AG04449 (cell line): ENCODE measurements at regions of chr1 and their contacts with region 1.

Region 1: GRCh38 chr1:44594871-44595746 is 79.2 kb downstream of the TMEM53 start:
- DNase-seq: no peak
- H3K4me3 ChIP-seq: no peak overlapping the region
- CTCF ChIP-seq: peak; percentile 99

Region 2: DNA sequence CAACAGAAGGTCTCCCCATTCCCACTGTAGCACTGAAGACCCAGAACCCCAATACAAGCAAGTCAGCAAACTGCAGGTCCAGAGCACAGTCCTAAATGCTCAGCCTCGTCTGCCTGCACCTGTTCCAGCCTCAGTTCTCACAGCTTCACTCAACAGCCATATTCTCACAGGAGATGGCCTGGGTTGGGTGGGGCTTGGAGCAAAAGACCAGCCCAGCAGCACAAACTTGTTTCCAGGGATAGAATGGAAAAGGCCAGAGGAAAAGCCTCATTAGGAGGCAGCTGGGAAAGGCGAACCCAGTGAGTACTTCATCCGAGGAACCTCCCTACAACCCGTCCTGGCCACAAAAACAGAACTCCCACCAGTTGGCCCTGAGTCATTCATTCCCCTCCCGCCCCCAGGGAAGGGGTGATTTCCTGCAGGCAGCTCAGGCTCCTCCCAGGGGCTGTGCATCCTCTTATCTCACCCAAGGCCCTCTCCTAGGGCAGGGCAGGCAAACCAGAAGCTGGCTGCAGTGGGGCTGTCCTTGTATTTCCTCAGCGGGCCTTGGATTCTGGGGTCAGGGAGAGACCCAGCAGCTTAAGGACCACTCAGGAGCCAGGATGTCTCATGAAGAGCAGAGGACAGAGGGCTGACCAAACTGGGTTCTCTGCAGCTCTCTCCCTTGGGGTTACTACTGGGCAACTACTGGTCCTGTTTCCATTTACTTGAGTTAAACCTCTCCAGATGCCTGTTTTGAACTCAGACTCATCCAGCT is 1264.9 kb before region 1 on chr1:
- CTCF ChIA-PET with region 1: no interaction called
- POLR2A ChIA-PET with region 1: no interaction called
- DNase-seq: no peak
- H3K4me3 ChIP-seq: no peak overlapping the region
- CTCF ChIP-seq: no peak

Region 3: DNA sequence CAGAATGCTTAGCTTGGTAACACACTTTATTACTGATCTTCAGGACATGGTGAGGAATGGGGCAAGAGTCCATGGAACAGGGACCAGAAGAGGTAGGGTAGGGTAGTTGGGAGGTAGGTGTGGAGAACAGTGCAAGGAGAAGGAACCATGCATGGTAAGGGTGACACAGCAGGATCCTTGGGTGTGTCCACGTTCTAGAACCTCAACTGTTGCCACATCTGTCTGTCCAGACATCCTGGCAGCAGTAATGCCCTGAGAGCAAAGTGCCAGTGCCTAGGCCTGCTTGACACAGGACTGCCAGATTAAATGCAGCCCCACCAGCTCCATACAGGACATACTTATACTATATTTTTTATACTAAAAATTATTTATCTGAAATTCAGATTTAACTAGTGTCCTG is 367.9 kb before region 1 on chr1:
- CTCF ChIA-PET with region 1: interaction called, 12 read pairs
- POLR2A ChIA-PET with region 1: no interaction called
- DNase-seq: no peak
- H3K4me3 ChIP-seq: no peak overlapping the region
- CTCF ChIP-seq: no peak

Region 4: DNA sequence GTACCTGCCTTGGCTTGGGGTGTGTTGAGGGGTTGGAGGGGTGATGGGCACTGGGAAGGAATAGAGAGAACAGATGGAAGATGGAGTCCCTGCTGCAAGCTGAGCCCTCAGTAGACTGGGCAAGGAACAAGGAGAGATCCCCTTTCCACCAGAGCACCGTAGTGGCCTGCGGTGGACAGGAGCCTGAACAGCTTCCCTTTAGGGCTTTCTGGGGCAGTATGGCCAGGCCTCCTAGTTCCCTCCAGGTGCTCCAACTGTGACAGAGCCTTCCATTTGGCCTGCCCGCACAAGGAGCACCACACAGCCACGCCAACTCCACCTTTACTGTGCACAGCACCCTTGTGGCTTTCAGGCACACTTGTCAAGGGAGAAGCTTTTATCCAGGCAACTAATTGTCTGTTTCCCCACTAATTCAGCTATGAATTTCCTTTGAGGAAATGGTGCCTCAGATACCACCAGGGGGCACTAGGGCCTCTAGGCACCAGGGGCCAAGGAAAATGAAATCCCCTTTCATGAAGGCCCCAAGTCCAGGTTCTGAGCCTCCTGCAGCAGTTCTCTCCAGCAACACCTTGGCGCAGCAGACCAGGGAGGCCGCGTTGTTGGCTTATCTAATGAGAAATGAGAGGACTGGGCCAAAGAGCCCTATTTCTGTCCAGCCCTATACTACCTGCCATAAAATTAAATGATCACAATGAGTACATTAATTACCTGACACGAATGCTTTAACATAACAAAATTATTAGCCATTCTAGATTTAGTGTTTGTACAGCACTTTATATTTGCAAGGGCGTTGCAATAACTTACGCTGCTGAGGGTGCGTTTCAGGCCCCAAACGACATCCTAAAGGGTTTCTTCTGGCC is 217.0 kb before region 1 on chr1:
- CTCF ChIA-PET with region 1: interaction called, 138 read pairs
- POLR2A ChIA-PET with region 1: no interaction called
- DNase-seq: no peak
- H3K4me3 ChIP-seq: no peak overlapping the region
- CTCF ChIP-seq: peak; percentile 72

Region 5: DNA sequence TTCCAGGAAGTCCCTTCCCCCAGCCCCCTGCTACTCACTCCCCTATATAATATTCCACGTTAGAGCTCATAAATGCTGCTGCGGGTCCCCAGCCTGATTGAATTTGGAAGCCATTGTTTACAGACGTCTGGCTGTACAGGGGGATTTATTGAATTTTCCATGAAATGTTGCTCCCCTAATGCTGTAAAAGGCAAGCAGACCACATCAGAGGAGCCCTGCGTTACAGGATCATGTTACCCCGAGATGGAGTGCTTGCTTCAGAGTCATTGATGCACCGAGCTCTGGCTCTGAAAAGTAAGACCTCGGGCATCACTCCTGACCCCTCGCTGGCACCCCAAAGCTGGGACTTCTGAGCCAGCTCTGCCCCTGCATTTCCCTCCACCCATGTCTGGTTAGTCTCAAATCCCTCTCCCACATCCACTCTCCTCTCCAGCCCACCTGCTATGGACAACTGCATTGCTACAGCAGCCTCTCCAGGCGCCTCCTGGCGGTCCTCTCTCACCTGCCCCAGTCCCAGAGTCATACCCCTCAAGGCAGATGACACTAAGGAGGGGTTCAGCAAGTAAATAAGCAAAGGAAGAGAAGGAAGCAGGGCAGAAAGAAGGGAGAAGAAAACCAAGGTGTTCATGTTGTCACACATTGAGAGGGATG is 48.6 kb before region 1 on chr1:
- CTCF ChIA-PET with region 1: no interaction called
- POLR2A ChIA-PET with region 1: no interaction called
- DNase-seq: no peak
- H3K4me3 ChIP-seq: no peak overlapping the region
- CTCF ChIP-seq: no peak

Region 6: DNA sequence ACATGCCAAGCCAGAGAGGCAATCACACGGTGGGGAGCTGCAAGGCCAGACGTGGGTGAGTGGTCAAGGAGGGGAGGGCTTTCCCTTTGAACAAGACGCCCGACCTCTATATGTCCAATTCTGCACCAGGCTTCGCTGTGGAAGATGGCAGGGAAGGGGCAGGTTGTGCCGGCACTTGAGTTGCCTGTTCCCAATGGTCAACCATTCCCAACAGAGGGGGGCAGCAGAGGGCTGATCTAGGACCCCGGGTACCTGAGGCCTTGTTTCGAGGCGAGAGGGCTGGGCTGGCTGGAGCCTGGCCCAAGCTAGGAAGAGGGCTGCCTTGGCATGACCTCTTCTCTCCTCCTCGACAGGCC is 14.3 kb after region 1 on chr1:
- CTCF ChIA-PET with region 1: interaction called, 48 read pairs
- POLR2A ChIA-PET with region 1: no interaction called
- DNase-seq: no peak
- H3K4me3 ChIP-seq: no peak overlapping the region
- CTCF ChIP-seq: peak; percentile 79

Region 7: GRCh38 chr1:44631647-44632539 is 36.8 kb after region 1 on chr1:
- CTCF ChIA-PET with region 1: interaction called, 21 read pairs
- POLR2A ChIA-PET with region 1: no interaction called
- DNase-seq: no peak
- H3K4me3 ChIP-seq: peak overlapping the region; percentile 72
- CTCF ChIP-seq: no peak